GM13977 (cell line): ENCODE measurements at regions of chr2 and their contacts with region 1.

Region 1: GRCh38 chr2:197383823-197384222 is 51.0 kb downstream of the SF3B1 start:
- DNase-seq: no peak
- CTCF ChIP-seq: no peak

Region 2: GRCh38 chr2:196783431-196784094 is 600.3 kb before region 1 on chr2:
- in situ Hi-C with region 1: loop called (anchors 10 kb)
- DNase-seq: no peak
- CTCF ChIP-seq: no peak

Region 3: DNA sequence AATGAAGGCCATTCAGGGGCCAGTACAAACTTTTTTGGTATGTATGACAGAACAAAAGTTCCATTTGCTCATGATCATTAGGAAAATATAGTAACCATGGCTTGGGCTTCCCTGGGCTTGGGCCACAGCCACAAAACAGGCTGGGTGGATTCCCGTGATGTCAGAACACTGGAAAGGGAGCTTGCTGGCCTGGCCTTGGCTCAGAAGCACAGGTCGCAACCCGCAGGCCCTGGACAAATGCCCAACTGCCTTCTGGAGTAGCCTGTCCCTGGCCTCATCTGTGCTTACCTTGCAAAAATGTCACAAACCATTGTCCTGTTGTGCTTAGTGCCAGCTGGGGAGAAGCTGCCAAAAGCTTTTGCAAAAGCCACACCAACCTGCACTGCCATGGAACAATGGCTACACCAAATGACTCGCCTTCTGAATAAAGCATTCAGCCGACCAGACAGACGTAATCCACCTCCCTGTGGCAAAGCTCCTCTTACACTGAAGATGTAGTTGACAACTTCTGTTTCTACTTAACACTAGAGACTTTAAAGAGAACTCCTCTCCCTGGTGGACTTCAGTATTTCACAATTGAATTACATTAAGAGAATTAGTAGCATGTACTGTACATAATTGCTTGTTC is 198.8 kb before region 1 on chr2:
- in situ Hi-C with region 1: loop called (anchors 10 kb)
- DNase-seq: no peak
- CTCF ChIP-seq: no peak

Region 4: DNA sequence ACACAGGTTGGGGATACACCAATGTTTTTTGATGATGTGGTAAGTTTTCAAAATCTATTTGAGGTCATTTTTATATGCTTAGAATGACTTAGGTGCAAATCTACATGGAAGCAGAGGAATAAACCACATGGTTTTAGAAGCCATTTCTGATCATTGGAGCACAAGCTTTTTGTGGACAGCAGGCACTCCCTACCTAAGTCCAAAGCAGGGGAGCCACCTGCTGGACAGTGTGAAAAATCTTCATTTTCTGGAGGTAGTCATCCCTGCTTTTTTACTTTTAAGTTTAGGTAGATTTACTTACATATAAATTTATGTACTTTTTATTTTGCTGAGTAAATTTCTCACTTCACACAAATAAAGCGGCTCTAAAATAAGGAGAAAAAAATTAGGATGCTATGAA is 743.8 kb after region 1 on chr2:
- in situ Hi-C with region 1: no loop called
- DNase-seq: peak; percentile 9
- CTCF ChIP-seq: peak; percentile 75